Head of caudate nucleus (tissue), 42 donors: ENCODE measurements at regions of chr1 and their contacts with region 1.

Region 1: GRCh38 chr1:203871107-203871875 is 9.9 kb downstream of the SNRPE start:
- DNase-seq: peak in 39 of 42 donors; percentile 16 to 83 (median 57)

Region 2: DNA sequence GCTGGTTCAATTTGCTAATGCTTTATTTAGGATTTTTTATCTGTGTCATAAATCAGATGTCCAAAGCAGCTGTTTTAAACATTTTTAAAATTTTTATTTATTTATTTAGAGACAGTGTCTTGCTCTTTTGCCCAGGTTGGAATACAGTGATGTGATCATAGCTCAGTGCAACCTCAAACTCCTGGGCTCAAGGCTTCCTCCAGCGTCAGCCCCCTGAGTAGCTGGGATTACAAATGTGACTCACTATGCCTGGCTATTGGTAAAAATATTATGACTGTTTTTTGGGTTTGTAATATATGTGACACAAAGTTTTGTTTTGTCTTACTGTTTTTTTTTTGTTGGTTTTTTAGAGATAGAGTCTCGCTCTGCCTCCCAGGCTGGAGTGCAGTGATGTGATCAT is 64.1 kb before region 1 on chr1:
- intact Hi-C with region 1: no loop called
- DNase-seq: no peak

Region 3: GRCh38 chr1:203996126-203996525 is 124.8 kb after region 1 on chr1:
- intact Hi-C with region 1: loop called (anchors 10 kb)
- DNase-seq: peak in 41 of 42 donors; percentile 8 to 80 (median 53)